Heart right ventricle (tissue), 16 donors: ENCODE measurements at regions of chr10 and their contacts with region 1.

Region 1: GRCh38 chr10:1572519-1573333 is 164.6 kb downstream of the ADARB2 start:
- DNase-seq: no peak
- ATAC-seq: peak in 1 of 8 donors; percentile 57
- H3K4me3 ChIP-seq: no peak overlapping the region
- H3K27ac ChIP-seq: no peak overlapping the region
- H3K4me1 ChIP-seq: no peaks in the 10 kb centered on the region
- H3K27me3 ChIP-seq: peaks cover 0 to 6% (median 0%) of the 10 kb centered on the region in 7 donors
- CTCF ChIP-seq: no peak

Region 2: GRCh38 chr10:1526144-1527050 is 46.3 kb before region 1 on chr10:
- intact Hi-C with region 1: loop called in 1 of 10 experiments (anchors 2 kb)
- DNase-seq: no peak
- ATAC-seq: no peak
- H3K4me3 ChIP-seq: no peak overlapping the region
- H3K27ac ChIP-seq: no peak overlapping the region
- H3K4me1 ChIP-seq: no peaks in the 10 kb centered on the region
- H3K27me3 ChIP-seq: peaks cover 0 to 31% (median 4%) of the 10 kb centered on the region in 7 donors
- CTCF ChIP-seq: no peak